H1 (cell line): ENCODE measurements at regions of chr11 and their contacts with region 1.

Region 1: DNA sequence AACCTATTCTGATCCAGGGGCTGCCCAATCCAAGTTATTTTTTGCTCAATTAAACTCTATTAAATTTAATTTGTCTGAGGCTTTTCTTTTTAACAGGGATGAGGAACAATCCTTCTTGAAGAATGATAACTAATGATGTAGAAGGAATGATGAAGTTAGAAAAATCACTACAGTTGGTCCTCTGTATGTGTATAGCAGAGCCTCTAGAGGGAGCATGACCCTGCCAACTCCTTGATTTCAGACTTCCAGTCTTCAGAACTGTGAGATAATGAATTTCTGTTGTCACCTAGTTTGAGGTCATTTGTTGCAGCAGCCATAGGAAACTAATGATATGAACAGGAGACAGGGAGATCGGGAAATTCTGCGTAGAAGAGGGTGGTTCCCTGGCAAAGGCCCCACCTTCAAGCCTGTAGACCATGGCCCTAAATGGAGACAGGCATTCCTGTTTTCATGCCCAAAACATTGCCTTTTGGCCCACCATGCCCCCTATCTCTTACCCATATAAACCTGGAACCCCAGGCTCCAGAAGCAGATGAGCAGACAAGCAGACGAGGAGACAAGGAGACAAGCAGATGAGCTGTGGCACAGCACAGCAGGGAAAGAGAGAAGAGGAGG is 7.7 kb upstream of the QSER1 start:
- DNase-seq: no peak
- H3K4me3 ChIP-seq: no peak overlapping the region
- H3K27ac ChIP-seq: no peak overlapping the region
- H3K4me1 ChIP-seq: peaks cover 0 to 8% (median 4%) of the 10 kb centered on the region in 4 experiments; a peak in 6 of 7 replicates
- H3K27me3 ChIP-seq: no peaks in the 10 kb centered on the region
- CTCF ChIP-seq: peak in 2 of 3 experiments; percentile 52 to 70; a peak in 3 of 4 replicates
- EP300 ChIP-seq: no peak
- POLR2A ChIP-seq: no peak
- RAD21 ChIP-seq: peak; percentile 53

Region 2: DNA sequence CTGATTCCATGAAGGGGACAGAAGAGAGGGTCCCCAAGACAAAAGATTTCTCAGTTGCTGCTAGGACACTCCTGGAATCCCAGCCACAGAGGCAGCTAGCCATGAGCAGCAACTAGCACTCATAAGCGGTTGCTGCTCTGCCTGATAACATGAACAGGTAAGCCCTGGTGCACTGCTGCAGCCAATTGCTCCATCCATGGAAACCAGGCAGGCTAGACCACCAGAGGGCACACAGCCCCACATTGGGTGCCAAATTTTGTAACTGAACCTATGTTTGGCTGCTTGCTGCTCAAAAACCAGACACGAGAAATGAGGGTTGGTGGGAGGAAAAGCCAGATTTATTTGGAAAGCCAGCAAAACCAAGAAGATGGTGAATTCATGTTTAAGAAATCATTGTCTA is 14.2 kb before region 1 on chr11:
- CTCF ChIA-PET with region 1: interaction called, 55 read pairs
- POLR2A ChIA-PET with region 1: interaction called, 4 read pairs
- DNase-seq: peak in 1 of 2 experiments; percentile 74
- H3K4me3 ChIP-seq: no peak overlapping the region
- H3K27ac ChIP-seq: no peak overlapping the region
- H3K4me1 ChIP-seq: peaks cover 0 to 6% (median 3%) of the 10 kb centered on the region in 4 experiments; a peak in 4 of 7 replicates
- H3K27me3 ChIP-seq: no peaks in the 10 kb centered on the region
- CTCF ChIP-seq: peak; percentile 73 to 84 (median 81)
- EP300 ChIP-seq: no peak
- POLR2A ChIP-seq: no peak
- RAD21 ChIP-seq: peak; percentile 68 to 78